Activated naive CD4-positive, alpha-beta T cell treated with anti-CD3 and anti-CD28 coated beads for 36 hours (primary cell): ENCODE measurements at regions of chr1 and their contacts with region 1.

Region 1: DNA sequence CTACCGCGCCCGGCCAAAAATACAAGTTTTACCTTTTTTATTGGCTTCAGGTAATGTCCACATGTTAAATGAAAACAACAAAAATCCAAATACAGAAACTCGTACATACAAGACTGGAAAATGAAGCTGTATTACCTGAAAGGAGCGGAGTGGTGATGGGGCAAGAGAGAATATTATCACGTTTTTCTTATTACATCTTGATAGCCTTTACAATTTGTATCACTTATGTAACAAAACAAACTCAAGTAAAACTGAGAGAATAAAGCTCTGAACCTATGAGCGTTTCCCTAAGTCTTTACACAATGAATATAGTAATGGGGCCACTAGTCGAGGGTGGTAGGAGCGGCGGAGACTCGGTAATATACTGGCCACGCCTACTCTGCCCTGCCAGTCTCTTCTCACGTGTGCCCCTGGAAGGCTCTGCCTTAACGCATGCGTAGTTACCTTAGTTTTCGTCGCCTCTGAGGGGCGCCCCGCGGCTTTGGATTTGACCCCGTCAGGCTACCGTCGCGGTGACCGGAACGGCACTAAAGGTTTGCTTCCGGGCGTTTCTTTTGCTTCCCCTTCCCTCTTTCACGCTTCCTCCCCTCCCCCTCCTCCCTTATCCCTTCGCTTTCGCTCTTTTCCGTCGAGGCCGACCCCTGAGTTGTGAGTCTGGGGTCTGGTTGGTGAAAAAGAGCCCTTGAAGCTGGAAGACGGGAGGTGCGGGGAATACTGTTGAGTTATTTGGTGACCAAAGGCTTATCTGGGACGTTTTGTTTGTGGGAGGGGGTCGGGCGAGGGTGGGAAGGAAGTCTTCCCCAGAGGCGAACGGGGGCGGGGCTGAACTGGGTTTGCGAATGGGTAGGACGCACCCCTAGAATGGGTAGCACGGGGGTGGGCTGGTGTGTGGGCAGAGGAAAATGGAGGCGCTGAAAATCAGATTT is at the start of gene SETDB1:
- DNase-seq: peak; percentile 97
- H3K4me3 Mint-ChIP-seq: peak within 1 kb of the TSS; percentile 96
- H3K27ac Mint-ChIP-seq: peak within 1 kb of the TSS; percentile 96
- H3K4me1 Mint-ChIP-seq: peaks cover 25% of the 10 kb centered on the region
- H3K27me3 Mint-ChIP-seq: no peaks in the 10 kb centered on the region
- total RNA-seq, gene SETDB1: 40.4 to 44.7 TPM

Region 2: DNA sequence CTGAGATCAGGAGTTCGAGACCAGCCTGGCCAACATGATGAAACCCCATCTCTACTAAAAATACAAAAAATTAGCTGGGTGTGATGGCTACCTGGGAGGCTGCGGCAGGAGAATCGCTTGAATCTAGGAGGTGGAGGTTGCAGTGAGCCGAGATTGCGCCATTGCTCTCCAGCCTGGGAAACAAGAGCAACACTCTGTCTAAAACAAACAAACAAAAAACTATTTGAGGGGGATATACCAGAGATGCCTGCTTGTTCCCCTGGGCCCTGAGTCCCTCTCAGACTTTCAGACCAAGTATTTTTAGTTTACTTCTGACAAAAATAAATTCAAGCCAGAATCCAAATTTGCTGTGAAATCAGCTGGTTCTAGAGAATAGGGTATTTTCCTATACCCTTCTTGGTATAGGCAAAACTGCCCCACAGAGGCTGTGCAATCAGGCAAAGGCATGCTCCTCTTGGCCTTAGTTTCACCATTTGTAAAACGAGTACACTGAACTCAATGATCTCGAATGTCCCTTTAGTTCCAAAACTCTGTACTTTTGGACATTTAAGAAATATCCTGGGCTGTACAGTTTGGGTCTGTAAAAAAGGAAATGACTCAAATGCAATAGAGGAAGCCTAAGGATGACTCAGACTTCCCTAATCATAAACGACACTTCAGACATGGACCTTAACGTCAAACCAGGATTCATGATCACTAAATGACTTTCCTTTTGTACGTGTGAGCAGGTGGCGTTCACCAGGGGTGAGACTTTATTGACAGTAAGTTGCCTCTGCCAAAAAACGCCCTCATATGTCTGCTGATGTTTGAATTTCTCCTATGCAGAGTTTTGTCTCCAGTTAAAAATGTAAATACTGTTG is 312.8 kb before region 1 on chr1:
- CTCF ChIA-PET with region 1: no interaction called
- intact Hi-C with region 1: loop called (anchors 1 kb)
- DNase-seq: peak; percentile 81
- H3K4me3 Mint-ChIP-seq: peak overlapping the region; percentile 41
- H3K27ac Mint-ChIP-seq: peak overlapping the region; percentile 93
- H3K4me1 Mint-ChIP-seq: peaks cover 64% of the 10 kb centered on the region
- H3K27me3 Mint-ChIP-seq: no peaks in the 10 kb centered on the region

Region 3: GRCh38 chr1:150696590-150697524 is 229.2 kb before region 1 on chr1 and contains the start of gene GOLPH3L:
- CTCF ChIA-PET with region 1: interaction called, 5 read pairs
- intact Hi-C with region 1: loop called (anchors 1 kb)
- DNase-seq: peak; percentile 97
- H3K4me3 Mint-ChIP-seq: peak within 1 kb of the TSS; percentile 92
- H3K27ac Mint-ChIP-seq: peak within 1 kb of the TSS; percentile 82
- H3K4me1 Mint-ChIP-seq: peaks cover 23% of the 10 kb centered on the region
- H3K27me3 Mint-ChIP-seq: peaks cover 2% of the 10 kb centered on the region
- total RNA-seq, gene GOLPH3L: 17.1 to 18.2 TPM

Region 4: DNA sequence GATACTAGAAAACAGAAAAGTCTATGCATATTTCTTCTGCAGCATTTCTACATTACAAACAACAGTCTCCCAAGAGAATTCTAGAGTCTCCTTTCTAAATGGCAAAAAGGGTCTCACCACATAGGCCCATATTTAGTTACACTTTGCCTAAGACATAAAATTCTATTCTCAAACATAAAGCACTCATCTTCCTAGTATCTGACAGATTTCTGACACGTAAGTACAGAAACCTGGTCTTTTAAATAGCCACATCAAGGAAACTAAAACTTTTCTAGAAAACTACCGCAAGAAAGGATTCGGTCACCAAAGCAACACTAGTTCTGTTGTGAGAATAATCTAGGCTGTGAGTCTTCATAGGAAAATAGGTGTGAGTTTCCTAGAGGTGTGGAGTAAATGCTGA is 84.5 kb before region 1 on chr1:
- CTCF ChIA-PET with region 1: interaction called, 6 read pairs
- intact Hi-C with region 1: loop called (anchors 1 kb)
- DNase-seq: no peak
- H3K4me3 Mint-ChIP-seq: no peak overlapping the region
- H3K27ac Mint-ChIP-seq: no peak overlapping the region
- H3K4me1 Mint-ChIP-seq: peaks cover 35% of the 10 kb centered on the region
- H3K27me3 Mint-ChIP-seq: no peaks in the 10 kb centered on the region

Region 5: GRCh38 chr1:150890033-150890416 is 36.1 kb before region 1 on chr1:
- CTCF ChIA-PET with region 1: interaction called, 5 read pairs
- intact Hi-C with region 1: loop called (anchors 1 kb)
- DNase-seq: no peak
- H3K4me3 Mint-ChIP-seq: no peak overlapping the region
- H3K27ac Mint-ChIP-seq: peak overlapping the region; percentile 12
- H3K4me1 Mint-ChIP-seq: peaks cover 25% of the 10 kb centered on the region
- H3K27me3 Mint-ChIP-seq: no peaks in the 10 kb centered on the region

Region 6: DNA sequence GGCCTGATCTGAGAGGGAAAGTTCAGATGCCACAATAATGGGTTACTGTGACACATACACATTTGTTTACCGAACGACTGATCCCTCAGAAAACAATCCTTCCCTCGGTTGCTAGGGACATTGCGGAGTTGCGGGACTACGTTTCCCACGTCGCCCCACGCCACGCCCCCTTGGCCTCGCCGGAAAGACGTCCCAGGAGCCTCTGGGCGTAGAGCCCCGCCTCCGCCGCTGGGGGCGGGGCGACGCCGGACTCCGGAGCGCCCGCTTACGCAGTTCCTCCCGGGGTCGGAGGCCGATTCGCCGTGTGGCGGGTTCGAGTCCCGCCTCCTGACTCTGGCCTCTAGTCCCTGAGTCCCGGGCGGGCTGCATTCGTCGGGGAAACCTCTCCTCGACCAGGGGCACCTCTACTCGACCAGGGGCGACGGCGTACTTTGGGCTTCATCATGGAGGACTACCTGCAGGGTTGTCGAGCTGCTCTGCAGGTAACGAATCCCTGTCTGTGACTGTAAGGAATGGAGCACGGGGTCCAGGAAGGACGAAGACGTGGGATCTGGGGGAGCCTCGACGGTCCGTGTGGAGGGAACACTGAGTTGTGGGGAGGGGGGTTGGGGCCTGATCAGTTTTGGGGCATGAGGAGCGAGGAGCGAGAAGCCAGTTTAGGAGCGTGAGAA is 82.2 kb after region 1 on chr1 and contains the start of gene PRUNE1:
- CTCF ChIA-PET with region 1: interaction called, 4 read pairs
- intact Hi-C with region 1: loop called (anchors 1 kb)
- DNase-seq: peak; percentile 97
- H3K4me3 Mint-ChIP-seq: peak within 1 kb of the TSS; percentile 92
- H3K27ac Mint-ChIP-seq: peak within 1 kb of the TSS; percentile 99
- H3K4me1 Mint-ChIP-seq: peaks cover 56% of the 10 kb centered on the region
- H3K27me3 Mint-ChIP-seq: no peaks in the 10 kb centered on the region
- total RNA-seq, gene PRUNE1: 13.3 to 15.9 TPM

Region 7: DNA sequence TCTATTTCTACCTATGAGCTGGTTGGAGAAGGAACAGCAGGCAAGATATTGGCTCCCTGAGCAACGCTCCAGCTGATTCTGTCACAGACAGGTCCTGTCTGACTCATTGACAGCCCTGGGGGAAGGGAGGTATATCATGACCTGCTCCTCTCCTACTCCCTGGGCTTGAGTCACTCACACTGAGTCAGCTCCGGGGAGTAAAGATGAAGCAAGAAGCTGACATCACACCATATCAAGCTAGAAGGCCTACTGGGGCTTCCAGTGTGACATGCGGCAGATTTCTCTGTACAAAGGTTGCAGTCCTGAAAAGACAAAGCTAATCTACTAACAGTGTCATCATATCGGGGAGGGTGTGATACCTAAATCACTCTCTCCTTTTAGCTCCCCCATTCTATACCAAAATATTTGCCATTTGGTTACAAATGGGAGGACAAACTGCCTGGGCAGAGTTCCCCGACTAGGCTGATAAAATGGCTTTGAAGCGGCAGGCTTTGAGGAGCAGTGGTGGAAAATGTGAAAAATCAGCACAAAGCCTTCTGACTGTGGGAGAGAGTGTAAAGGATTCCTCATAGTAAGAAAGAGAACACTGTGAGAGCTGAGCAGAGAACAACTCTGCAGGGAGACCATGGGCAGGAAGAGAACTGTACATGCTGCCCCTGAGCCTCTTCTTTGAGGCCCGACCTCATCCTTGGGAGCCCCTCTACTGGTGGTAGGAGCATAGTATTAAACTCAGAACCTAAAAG is 385.7 kb after region 1 on chr1:
- CTCF ChIA-PET with region 1: no interaction called
- intact Hi-C with region 1: loop called (anchors 1 kb)
- DNase-seq: peak; percentile 94
- H3K4me3 Mint-ChIP-seq: no peak overlapping the region
- H3K27ac Mint-ChIP-seq: peak overlapping the region; percentile 92
- H3K4me1 Mint-ChIP-seq: peaks cover 37% of the 10 kb centered on the region
- H3K27me3 Mint-ChIP-seq: no peaks in the 10 kb centered on the region